ENCODE measurements at regions of chr16 and their contacts with region 1.

Region 1: DNA sequence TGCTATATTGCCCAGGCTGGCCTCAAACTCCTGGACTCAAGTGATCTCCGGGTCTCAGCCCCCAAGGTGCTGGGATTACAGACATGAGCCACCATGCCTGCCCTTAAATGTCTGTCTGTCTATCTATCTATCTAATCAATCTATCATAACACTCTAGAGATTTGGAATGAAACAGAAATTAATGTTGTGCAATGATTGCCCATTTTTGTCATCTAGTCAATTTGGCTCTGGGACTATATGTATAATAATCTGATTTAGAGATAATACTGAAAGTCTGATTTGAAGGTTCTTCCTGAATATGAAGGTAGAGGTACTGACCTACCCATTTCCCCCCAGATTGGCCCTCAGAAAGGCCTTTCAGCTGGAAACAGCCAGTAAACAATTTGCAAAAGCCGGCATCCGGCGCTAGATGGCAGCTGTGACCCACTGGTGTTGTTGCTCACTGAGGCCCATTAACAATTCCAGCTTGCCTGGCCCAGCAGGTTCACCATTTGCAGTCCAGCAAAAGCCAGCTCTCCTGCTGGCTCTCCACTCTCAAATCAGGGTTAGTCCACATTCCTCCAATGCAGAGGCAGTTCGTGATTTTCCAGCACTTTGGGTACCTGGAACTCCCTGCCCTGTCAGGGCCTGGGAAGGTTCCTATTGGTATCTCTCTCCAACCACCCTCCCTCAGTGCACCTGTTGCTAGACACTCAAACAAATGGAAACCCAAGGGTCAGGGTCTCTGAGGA is 22.9 kb upstream of the C16orf87 start:
- DNase-seq: peak; percentile 78 to 84 (median 82)
- ATAC-seq: peak; percentile 94 to 97 (median 95)
- H3K4me3 ChIP-seq: no peak overlapping the region
- H3K27ac ChIP-seq: no peak overlapping the region
- H3K4me1 ChIP-seq: no peaks in the 10 kb centered on the region
- H3K27me3 ChIP-seq: no peaks in the 10 kb centered on the region
- CTCF ChIP-seq: peak; percentile 77 to 84 (median 83)
- POLR2A ChIP-seq: no peak

Region 2: DNA sequence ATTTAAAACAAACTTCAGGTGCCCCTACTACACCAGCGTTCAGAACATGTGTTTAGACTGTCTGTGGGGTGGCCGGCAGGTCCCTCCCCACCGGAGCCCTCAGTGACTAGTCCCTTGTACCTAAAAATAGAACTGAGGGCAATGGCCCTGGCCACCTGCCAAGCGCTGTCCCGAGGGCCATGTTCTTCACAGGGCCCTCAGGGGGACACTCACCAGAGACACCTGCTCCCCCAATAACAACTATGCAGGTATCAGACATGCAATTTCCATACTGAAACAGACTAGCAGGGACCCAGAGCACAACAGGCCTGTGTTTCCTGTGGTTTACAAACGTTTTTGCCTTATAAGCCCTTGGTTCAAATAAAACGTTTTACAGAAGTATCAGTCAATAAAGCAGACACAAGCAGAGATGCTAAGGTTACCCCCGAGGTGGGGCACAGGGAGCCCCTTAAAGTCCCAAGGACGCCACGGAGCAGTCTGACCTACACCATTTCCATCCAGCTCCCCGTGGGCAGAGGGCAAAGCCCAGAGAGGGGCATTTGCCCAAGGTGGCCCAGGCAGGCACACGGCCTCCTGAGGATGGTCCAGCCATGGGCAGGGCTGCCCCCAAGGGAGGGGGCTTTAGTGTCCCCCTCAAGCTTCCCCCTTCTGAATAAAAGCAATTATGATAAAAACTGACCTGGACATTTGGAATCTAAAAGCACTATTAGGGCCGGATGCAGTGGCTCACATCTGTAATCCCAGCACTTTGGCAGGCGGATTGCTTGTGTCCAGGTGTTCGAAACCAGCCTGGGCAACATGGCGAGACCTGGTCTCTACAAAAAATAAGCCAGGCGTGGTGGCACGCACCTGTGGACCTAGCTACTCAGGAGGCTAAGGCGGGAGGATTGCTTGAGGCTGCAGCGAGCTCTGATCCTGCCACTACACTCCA is 104.8 kb before region 1 on chr16:
- intact Hi-C with region 1: no loop called
- DNase-seq: no peak
- ATAC-seq: no peak
- H3K4me3 ChIP-seq: no peak overlapping the region
- H3K27ac ChIP-seq: no peak overlapping the region
- H3K4me1 ChIP-seq: no peaks in the 10 kb centered on the region
- H3K27me3 ChIP-seq: no peaks in the 10 kb centered on the region
- CTCF ChIP-seq: no peak
- POLR2A ChIP-seq: no peak

Region 3: GRCh38 chr16:46908540-46909372 is 54.9 kb after region 1 on chr16:
- intact Hi-C with region 1: loop called (anchors 5 kb)
- DNase-seq: no peak
- ATAC-seq: peak; percentile 23 to 72 (median 63)
- H3K4me3 ChIP-seq: no peak overlapping the region
- H3K27ac ChIP-seq: no peak overlapping the region
- H3K4me1 ChIP-seq: no peaks in the 10 kb centered on the region
- H3K27me3 ChIP-seq: no peaks in the 10 kb centered on the region
- CTCF ChIP-seq: peak; percentile 59 to 72 (median 69)
- POLR2A ChIP-seq: no peak

Region 4: DNA sequence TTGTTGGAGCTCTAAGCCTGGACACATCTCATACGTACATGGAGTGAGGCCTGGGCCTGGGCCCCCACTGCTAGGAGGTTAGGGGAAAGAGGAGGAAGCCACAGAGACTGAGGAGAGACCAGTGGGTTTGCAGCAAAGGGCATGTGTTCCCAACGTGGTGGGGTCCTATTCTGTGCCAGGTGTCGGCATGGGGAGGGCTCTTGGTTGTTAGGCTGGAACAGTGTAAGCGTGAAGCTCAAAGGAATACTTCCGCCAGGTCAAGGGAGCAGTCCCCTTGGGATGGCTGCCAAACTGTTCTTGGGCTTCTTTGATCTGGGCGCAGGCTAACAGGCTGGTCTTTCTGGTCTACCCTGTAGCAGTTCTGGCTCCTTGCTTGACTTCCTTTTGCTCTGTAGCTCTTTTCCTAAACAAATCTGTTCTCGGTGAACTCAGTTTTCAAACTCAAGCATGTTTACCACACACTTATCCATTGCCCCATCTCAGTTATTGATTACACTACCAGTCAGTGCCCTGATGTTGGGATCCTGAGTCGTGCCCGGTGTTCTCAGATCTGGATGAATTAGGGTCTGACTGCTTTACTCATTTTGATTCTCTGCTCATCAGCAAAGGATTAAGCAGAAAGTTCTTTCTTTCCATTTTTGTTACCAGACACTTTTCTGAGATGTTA is 66.7 kb after region 1 on chr16:
- intact Hi-C with region 1: loop called in 1 of 2 experiments (anchors 5 kb)
- DNase-seq: no peak
- ATAC-seq: peak; percentile 15 to 57 (median 36)
- H3K4me3 ChIP-seq: no peak overlapping the region
- H3K27ac ChIP-seq: peak overlapping the region in 2 of 3 donors; percentile 68 to 86
- H3K4me1 ChIP-seq: peaks cover 0 to 39% (median 6%) of the 10 kb centered on the region in 4 donors
- H3K27me3 ChIP-seq: no peaks in the 10 kb centered on the region
- CTCF ChIP-seq: no peak
- POLR2A ChIP-seq: no peak